B cell (primary cell): ENCODE measurements at regions of chr10 and their contacts with region 1.

Region 1: GRCh38 chr10:98028168-98028770 is 2.2 kb downstream of the CRTAC1 start:
- DNase-seq: peak; percentile 50
- ATAC-seq: no peak
- H3K4me3 ChIP-seq: no peak overlapping the region
- H3K4me3 Mint-ChIP-seq: no peak overlapping the region
- H3K27ac ChIP-seq: no peak overlapping the region
- H3K27ac Mint-ChIP-seq: no peak overlapping the region
- H3K4me1 ChIP-seq: peaks cover 6 to 13% of the 10 kb centered on the region in 2 donors
- H3K4me1 Mint-ChIP-seq: peaks cover 9% of the 10 kb centered on the region
- H3K27me3 ChIP-seq: peaks cover 0 to 50% (median 27%) of the 10 kb centered on the region in 4 experiments
- H3K27me3 Mint-ChIP-seq: peaks cover 62% of the 10 kb centered on the region
- CTCF ChIP-seq: peak; percentile 68

Region 2: GRCh38 chr10:98045785-98046389 is 17.6 kb after region 1 on chr10:
- CTCF ChIA-PET with region 1: interaction called, 42 read pairs
- POLR2A ChIA-PET with region 1: no interaction called
- intact Hi-C with region 1: no loop called
- DNase-seq: peak; percentile 70
- ATAC-seq: peak; percentile 56
- H3K4me3 ChIP-seq: no peak overlapping the region
- H3K4me3 Mint-ChIP-seq: no peak overlapping the region
- H3K27ac ChIP-seq: no peak overlapping the region
- H3K27ac Mint-ChIP-seq: no peak overlapping the region
- H3K4me1 ChIP-seq: no peaks in the 10 kb centered on the region
- H3K4me1 Mint-ChIP-seq: no peaks in the 10 kb centered on the region
- H3K27me3 ChIP-seq: peaks cover 0 to 29% (median 15%) of the 10 kb centered on the region in 4 experiments
- H3K27me3 Mint-ChIP-seq: peaks cover 48% of the 10 kb centered on the region
- CTCF ChIP-seq: peak; percentile 96

Region 3: GRCh38 chr10:98528166-98528804 is 500.0 kb after region 1 on chr10:
- CTCF ChIA-PET with region 1: no interaction called
- POLR2A ChIA-PET with region 1: no interaction called
- intact Hi-C with region 1: no loop called
- DNase-seq: no peak
- ATAC-seq: no peak
- H3K4me3 ChIP-seq: no peak overlapping the region
- H3K4me3 Mint-ChIP-seq: no peak overlapping the region
- H3K27ac ChIP-seq: no peak overlapping the region
- H3K27ac Mint-ChIP-seq: no peak overlapping the region
- H3K4me1 ChIP-seq: no peaks in the 10 kb centered on the region
- H3K4me1 Mint-ChIP-seq: no peaks in the 10 kb centered on the region
- H3K27me3 ChIP-seq: peaks cover 0 to 5% (median 0%) of the 10 kb centered on the region in 4 experiments
- H3K27me3 Mint-ChIP-seq: peaks cover 5% of the 10 kb centered on the region
- CTCF ChIP-seq: no peak

Region 4: DNA sequence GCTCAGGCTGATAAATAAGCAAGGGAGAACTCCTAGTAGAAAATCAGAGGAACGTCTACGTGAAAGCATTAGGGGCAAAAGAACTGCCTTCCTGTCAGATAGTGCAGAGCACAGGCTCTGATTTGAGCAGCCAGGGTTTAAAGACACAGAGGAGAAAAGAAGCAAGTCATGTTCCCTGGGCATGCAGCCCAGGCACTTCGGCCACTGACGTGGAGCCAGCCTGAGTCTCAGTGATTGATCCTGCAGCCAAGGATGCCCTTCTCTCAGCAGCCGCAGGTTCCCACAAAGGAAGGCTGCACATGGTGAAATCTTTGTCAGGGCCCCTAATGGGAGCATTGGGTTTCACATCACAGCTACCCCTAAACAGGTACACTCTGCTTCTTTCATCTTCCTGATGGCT is 580.1 kb after region 1 on chr10:
- CTCF ChIA-PET with region 1: no interaction called
- POLR2A ChIA-PET with region 1: no interaction called
- intact Hi-C with region 1: no loop called
- DNase-seq: no peak
- ATAC-seq: no peak
- H3K4me3 ChIP-seq: no peak overlapping the region
- H3K4me3 Mint-ChIP-seq: no peak overlapping the region
- H3K27ac ChIP-seq: no peak overlapping the region
- H3K27ac Mint-ChIP-seq: no peak overlapping the region
- H3K4me1 ChIP-seq: no peaks in the 10 kb centered on the region
- H3K4me1 Mint-ChIP-seq: no peaks in the 10 kb centered on the region
- H3K27me3 ChIP-seq: peaks cover 0 to 12% (median 4%) of the 10 kb centered on the region in 4 experiments
- H3K27me3 Mint-ChIP-seq: peaks cover 35% of the 10 kb centered on the region
- CTCF ChIP-seq: no peak